ENCODE measurements at regions of chr11 and their contacts with region 1.

Region 1: DNA sequence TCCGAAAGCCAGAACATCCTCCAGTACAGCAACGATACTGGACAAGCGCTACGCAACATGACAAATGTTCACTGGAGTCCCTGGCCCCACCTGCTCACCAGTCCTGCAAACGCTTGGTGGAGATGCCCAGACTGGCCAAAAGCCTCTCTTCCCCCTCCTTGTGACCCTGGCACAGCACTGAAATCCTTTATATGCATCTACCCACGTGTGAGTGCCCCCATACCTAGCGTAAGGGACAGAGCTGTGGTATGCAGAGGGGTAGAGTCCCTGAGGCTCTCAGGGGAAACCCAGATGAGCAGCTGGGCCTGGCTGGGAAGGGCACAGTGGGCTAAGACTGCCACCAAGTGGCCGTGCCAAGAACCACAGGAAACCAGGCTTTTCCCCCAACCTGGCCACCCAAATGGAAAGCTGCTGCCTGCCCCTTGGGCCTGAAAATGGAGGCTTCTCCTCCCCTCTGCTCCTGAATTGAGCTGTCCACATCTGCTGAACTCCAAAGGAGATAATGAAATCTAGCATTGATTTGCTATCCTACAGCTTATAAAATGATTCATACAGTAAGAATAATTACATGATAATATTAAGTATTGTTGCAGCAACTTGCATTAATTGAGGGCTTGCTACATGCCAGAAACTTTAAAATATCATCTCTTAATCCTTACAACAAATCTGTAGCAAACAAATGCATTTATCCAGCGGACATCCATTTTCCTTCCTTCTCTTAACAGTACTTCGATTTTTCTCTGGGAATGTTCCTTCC is 24.8 kb upstream of the TTC12 start:
- DNase-seq: peak; percentile 38
- ATAC-seq: peak; percentile 91
- H3K4me3 ChIP-seq: no peak overlapping the region
- H3K27ac ChIP-seq: no peak overlapping the region
- H3K4me1 ChIP-seq: peaks cover 6% of the 10 kb centered on the region; the same call in 1 of the 2 replicates
- H3K27me3 ChIP-seq: peaks cover 8% of the 10 kb centered on the region; the same call in 1 of the 2 replicates
- CTCF ChIP-seq: peak; percentile 89
- POLR2A ChIP-seq: no peak
- RAD21 ChIP-seq: peak; percentile 92

Region 2: GRCh38 chr11:112226062-112226830 is 1063.4 kb before region 1 on chr11 and contains the start of gene PTS:
- CTCF ChIA-PET with region 1: interaction called, 3 read pairs
- POLR2A ChIA-PET with region 1: no interaction called
- dilution Hi-C with region 1: no loop called
- in situ Hi-C with region 1: loop called (anchors 10 kb)
- intact Hi-C with region 1: loop called (anchors 1 kb)
- DNase-seq: peak; percentile 82
- ATAC-seq: peak; percentile 94
- H3K4me3 ChIP-seq: peak within 1 kb of the TSS; percentile 93
- H3K27ac ChIP-seq: peak within 1 kb of the TSS; percentile 98
- H3K4me1 ChIP-seq: peaks cover 16% of the 10 kb centered on the region
- H3K27me3 ChIP-seq: no peaks in the 10 kb centered on the region
- CTCF ChIP-seq: no peak
- POLR2A ChIP-seq: peak; percentile 93
- RAD21 ChIP-seq: no peak
- total RNA-seq, gene PTS: 21.0 and 63.6 TPM in 2 replicates

Region 3: GRCh38 chr11:112588252-112588694 is 701.3 kb before region 1 on chr11:
- CTCF ChIA-PET with region 1: interaction called, 26 read pairs
- POLR2A ChIA-PET with region 1: no interaction called
- dilution Hi-C with region 1: no loop called
- in situ Hi-C with region 1: loop called (anchors 5 kb)
- intact Hi-C with region 1: loop called (anchors 1 kb)
- DNase-seq: peak; percentile 77
- ATAC-seq: peak; percentile 92
- H3K4me3 ChIP-seq: no peak overlapping the region
- H3K27ac ChIP-seq: no peak overlapping the region
- H3K4me1 ChIP-seq: no peaks in the 10 kb centered on the region
- H3K27me3 ChIP-seq: peaks cover 13% of the 10 kb centered on the region
- CTCF ChIP-seq: peak; percentile 63
- POLR2A ChIP-seq: no peak
- RAD21 ChIP-seq: peak; percentile 67

Region 4: DNA sequence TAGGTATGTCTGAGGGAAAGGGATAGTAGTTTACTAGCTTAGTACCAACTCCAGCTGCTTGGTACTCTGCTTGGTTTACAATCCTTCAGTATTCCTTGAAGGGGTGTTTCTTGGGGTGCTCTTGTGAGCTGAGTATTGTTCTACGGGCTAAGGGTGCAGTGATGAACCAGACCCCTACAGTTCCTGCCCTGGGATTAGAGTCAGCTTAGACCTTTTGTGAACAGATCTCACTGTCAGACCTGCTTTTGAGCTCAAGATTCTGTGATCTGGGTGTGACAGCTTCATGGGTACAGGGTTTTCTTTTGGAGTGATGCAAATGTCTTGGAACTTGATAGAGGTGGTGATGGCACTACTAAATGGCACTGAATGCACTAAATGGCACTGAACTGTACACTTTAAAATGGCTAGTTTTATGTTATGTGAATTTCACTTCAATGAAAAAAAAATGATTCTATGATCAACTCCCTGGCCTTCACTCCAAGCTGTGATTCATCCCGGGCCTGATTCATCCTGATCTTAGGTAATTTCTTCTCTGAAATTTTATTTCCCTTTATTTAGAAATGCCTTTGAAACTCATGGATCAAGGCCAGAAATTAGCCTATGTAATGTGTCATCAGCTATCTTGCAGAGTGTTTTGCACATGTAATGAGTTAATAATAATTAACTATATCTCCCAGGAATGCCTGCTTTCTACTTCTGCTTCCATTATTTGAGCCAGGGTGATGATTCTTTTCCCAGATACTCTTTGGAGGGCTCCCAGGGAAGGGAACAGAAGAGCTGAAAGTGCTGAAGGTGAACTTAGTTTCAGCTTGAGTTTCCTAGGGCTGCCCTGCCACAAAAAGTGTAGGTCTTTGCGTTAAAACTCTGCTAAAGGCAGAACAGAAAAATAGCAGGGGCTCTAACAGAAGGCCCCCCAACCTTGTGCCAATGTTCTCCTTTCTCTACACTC is 240.5 kb before region 1 on chr11:
- CTCF ChIA-PET with region 1: no interaction called
- POLR2A ChIA-PET with region 1: no interaction called
- dilution Hi-C with region 1: no loop called
- in situ Hi-C with region 1: no loop called
- intact Hi-C with region 1: no loop called
- DNase-seq: no peak
- ATAC-seq: no peak
- H3K4me3 ChIP-seq: no peak overlapping the region
- H3K27ac ChIP-seq: no peak overlapping the region
- H3K4me1 ChIP-seq: no peaks in the 10 kb centered on the region
- H3K27me3 ChIP-seq: no peaks in the 10 kb centered on the region
- CTCF ChIP-seq: no peak
- POLR2A ChIP-seq: no peak
- RAD21 ChIP-seq: no peak

Region 5: GRCh38 chr11:113113801-113114706 is 175.6 kb before region 1 on chr11:
- CTCF ChIA-PET with region 1: no interaction called
- POLR2A ChIA-PET with region 1: no interaction called
- dilution Hi-C with region 1: no loop called
- in situ Hi-C with region 1: no loop called
- intact Hi-C with region 1: no loop called
- DNase-seq: peak; percentile 8
- ATAC-seq: peak; percentile 75
- H3K4me3 ChIP-seq: no peak overlapping the region
- H3K27ac ChIP-seq: no peak overlapping the region
- H3K4me1 ChIP-seq: no peaks in the 10 kb centered on the region
- H3K27me3 ChIP-seq: no peaks in the 10 kb centered on the region
- CTCF ChIP-seq: peak; percentile 42
- POLR2A ChIP-seq: no peak
- RAD21 ChIP-seq: peak; percentile 45